Activated naive CD4-positive, alpha-beta T cell treated with anti-CD3 and anti-CD28 coated beads for 36 hours (primary cell): ENCODE measurements at regions of chr4 and their contacts with region 1.

Region 1: DNA sequence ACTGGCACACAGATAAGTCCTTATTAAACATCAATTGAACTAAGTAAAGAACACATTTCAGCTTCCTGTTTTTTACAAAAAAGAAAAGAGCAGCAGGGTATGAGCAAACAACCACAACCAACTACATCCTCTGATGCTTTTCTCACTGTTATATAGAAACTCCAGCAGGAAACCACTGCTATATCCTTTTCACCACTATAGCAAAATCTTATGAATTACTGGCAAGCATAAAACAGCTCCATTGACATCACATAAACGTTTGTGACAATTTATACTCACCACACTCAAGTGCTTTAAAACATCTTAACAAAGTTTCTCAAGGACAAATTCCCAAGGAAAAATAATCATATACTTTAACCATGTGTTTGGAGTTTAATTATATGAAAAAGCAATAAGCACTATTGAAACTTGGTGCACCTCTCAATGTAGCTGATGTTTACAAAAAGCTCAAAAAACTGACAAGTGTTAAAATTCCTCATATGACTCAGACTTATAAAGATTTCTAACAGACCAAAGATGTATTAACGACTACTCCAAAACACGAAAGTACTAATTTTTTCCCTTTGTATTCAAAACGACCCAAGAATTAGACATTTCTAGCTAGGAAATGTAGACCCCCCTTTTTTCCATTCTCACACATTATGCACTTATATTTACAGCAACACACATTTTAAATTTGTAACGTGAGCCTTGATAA is 12.9 kb downstream of the GPRIN3 start:
- DNase-seq: no peak
- H3K4me3 Mint-ChIP-seq: peak overlapping the region; percentile 49
- H3K27ac Mint-ChIP-seq: peak overlapping the region; percentile 94
- H3K4me1 Mint-ChIP-seq: peaks cover 79% of the 10 kb centered on the region
- H3K27me3 Mint-ChIP-seq: no peaks in the 10 kb centered on the region

Region 2: GRCh38 chr4:88456757-88457306 is 837.9 kb before region 1 on chr4 and contains the start of gene HERC5:
- CTCF ChIA-PET with region 1: no interaction called
- intact Hi-C with region 1: loop called (anchors 10 kb)
- DNase-seq: peak; percentile 93
- H3K4me3 Mint-ChIP-seq: peak within 1 kb of the TSS; percentile 98
- H3K27ac Mint-ChIP-seq: peak within 1 kb of the TSS; percentile 97
- H3K4me1 Mint-ChIP-seq: peaks cover 5% of the 10 kb centered on the region
- H3K27me3 Mint-ChIP-seq: no peaks in the 10 kb centered on the region
- total RNA-seq, gene HERC5: 38.8 to 39.5 TPM

Region 3: GRCh38 chr4:88938135-88938534 is 356.6 kb before region 1 on chr4:
- CTCF ChIA-PET with region 1: no interaction called
- intact Hi-C with region 1: loop called (anchors 10 kb)
- DNase-seq: no peak
- H3K4me3 Mint-ChIP-seq: no peak overlapping the region
- H3K27ac Mint-ChIP-seq: no peak overlapping the region
- H3K4me1 Mint-ChIP-seq: peaks cover 40% of the 10 kb centered on the region
- H3K27me3 Mint-ChIP-seq: no peaks in the 10 kb centered on the region

Region 4: GRCh38 chr4:89242864-89243732 is 51.6 kb before region 1 on chr4:
- CTCF ChIA-PET with region 1: interaction called, 3 read pairs
- intact Hi-C with region 1: loop called (anchors 2 kb)
- DNase-seq: peak; percentile 12
- H3K4me3 Mint-ChIP-seq: no peak overlapping the region
- H3K27ac Mint-ChIP-seq: peak overlapping the region; percentile 24
- H3K4me1 Mint-ChIP-seq: peaks cover 24% of the 10 kb centered on the region
- H3K27me3 Mint-ChIP-seq: no peaks in the 10 kb centered on the region

Region 5: GRCh38 chr4:89307446-89308160 is 12.9 kb after region 1 on chr4 and contains the start of gene GPRIN3:
- CTCF ChIA-PET with region 1: interaction called, 6 read pairs
- intact Hi-C with region 1: loop called (anchors 1 kb)
- DNase-seq: peak; percentile 75
- H3K4me3 Mint-ChIP-seq: peak within 1 kb of the TSS; percentile 90
- H3K27ac Mint-ChIP-seq: peak within 1 kb of the TSS; percentile 78
- H3K4me1 Mint-ChIP-seq: peaks cover 55% of the 10 kb centered on the region
- H3K27me3 Mint-ChIP-seq: no peaks in the 10 kb centered on the region
- total RNA-seq, gene GPRIN3: 8.6 to 8.8 TPM

Region 6: DNA sequence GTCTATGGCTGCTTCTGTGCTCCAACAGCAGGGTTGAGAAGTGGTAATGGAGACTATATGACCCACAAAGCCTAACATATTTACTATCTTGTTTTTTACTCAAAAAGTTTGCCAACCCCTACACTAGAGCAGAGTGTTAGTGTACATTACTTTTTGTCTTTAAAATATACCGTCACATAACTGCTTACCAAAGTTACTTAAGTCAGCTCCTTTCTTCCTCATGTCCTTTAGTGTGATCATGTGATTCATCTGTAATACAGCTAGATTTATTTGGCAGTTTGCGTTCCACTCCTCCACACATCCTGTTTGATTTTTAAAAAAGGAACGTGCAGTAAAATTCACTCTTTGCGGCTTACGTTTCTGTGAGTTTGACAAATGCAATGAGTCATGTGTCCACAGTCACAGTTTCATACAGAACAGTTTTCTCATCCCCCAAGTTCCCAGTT is 175.2 kb after region 1 on chr4:
- CTCF ChIA-PET with region 1: no interaction called
- intact Hi-C with region 1: loop called (anchors 1 kb)
- DNase-seq: peak; percentile 54
- H3K4me3 Mint-ChIP-seq: peak overlapping the region; percentile 2
- H3K27ac Mint-ChIP-seq: peak overlapping the region; percentile 71
- H3K4me1 Mint-ChIP-seq: peaks cover 26% of the 10 kb centered on the region
- H3K27me3 Mint-ChIP-seq: no peaks in the 10 kb centered on the region